ENCODE measurements at regions of chr3 and their contacts with region 1.

Region 1: DNA sequence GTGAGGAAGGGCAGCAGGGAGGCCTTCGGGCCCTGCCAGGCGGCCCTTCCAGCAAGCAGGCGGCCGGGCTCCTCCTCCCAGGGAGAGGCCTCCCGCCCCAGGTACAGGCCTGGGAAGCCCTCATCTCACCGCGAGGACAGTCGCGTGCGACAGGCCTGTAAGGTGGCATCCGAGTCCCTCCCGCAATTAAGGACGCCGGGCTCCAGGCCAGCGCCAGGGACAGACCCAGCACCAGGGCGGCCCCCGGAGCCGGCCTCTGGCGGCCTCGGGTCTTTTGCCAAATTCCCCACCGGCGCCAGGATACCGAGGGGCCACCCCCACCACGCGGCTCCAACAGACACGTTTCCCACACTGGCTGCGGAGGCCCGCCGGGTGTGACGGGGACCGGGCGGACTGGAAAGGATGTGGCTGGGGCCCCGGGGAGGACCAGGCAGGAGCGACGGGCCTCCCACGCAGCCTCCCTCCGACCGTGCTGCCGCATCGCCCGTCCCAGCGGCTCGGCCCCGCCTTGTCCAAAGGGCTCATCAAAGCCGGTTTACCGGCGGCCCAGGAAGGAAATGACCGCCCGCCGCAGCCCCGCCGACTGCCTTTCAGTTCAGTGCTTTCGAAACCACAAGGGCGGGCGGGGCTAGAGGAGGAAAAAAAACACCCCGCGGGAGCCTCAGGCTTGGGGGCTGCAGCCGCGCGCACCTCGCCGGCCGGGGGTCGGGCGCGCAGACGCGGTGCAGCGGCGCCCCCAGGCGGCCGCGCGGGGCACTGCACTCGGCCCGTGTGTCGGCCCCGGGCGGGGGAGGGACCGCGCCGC is 11.3 kb downstream of the XXYLT1 start:
- DNase-seq: peak; percentile 94
- ATAC-seq: peak; percentile 89

Region 2: DNA sequence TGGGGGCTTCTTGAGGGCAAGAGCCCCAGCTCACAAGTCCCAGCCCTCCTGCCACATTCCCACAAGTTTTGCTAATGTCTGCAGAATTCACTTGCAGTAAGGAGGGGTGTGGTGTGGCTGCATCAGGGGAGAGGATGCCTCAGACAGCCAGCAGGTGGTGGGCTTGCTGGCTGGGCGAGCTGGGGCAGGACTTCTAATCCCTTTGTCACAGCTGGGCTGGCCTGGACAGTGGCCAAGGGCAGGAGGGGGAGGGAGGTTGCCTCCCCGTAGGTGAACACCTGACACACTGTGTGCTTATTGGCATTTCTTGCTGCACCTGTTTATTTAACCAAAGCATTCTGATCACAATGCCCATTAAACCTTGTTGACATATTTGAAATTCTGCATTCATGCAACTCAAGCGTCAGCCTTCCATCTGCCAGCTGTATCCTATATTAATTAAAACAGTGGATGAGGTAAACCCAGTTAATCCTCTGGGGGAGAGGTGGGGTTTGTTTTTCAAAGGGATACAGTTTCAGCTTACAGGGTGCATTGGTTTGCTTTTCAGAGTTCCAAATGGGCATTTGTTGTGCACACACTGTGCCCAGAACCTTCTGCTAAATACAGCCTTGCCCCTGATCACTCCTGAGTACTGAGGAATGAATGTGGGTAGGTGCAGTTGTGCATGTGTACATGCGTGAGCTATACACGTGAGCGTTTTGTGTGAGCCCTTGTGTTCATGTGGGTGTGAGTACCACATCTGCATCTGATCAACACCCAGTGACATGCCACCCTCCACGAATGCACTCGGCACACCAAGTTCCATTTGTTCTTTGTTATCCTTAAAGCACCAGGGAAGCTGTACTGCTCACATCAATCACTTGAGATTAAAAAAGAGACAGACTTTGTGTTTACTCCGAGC is 257.5 kb before region 1 on chr3:
- intact Hi-C with region 1: loop called (anchors 2 kb)
- DNase-seq: no peak
- ATAC-seq: peak; percentile 43

Measured in Right ventricle myocardium inferior (tissue), 1 donor.